CD8-positive, alpha-beta T cell (primary cell): ENCODE measurements at regions of chr21 and their contacts with region 1.

Region 1: DNA sequence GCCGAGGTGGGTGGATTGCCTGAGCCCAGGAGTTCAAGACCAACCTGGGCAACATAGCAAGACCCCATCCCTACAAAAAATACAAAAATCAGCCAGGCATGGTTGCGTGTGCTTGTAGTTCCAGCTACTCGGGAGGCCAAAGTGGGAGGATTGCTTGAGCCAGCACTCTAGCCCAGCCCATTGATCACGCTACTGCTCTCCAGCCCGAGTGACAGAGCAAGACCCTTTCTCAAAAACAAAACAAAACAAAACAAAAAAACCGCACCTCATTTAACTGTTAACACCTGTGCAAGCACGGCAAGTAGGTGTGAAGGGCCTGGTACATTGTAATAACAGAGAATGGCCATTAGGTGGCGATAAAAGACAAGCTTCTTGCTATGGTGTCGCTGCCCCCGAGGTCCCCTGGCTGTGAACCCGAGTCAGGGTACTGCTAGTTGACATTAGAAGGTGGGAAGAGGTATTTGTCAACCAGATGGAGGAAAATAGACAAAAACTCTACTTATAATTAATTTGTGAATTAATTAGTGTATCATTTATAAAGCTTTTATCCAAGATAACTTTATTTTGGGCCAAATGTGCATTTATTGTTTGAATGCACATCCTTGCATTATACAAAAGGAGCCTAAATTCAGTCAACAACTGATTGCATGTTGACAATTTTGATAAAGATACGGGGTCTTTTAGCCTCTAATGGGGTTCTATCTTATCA is 66.5 kb downstream of the SH3BGR start:
- DNase-seq: peak in 8 of 9 experiments; percentile 13 to 69 (median 44)
- ATAC-seq: peak; percentile 65
- H3K4me3 ChIP-seq: no peak overlapping the region
- H3K4me3 Mint-ChIP-seq: no peak overlapping the region
- H3K27ac ChIP-seq: no peak overlapping the region
- H3K27ac Mint-ChIP-seq: no peak overlapping the region
- H3K4me1 ChIP-seq: no peaks in the 10 kb centered on the region
- H3K4me1 Mint-ChIP-seq: no peaks in the 10 kb centered on the region
- H3K27me3 ChIP-seq: no peaks in the 10 kb centered on the region
- H3K27me3 Mint-ChIP-seq: peaks cover 5% of the 10 kb centered on the region
- CTCF ChIP-seq: peak; percentile 91

Region 2: GRCh38 chr21:39715804-39716397 is 197.6 kb after region 1 on chr21:
- CTCF ChIA-PET with region 1: interaction called, 9 read pairs
- POLR2A ChIA-PET with region 1: no interaction called
- intact Hi-C with region 1: loop called in 1 of 2 experiments (anchors 1 kb)
- DNase-seq: peak in 7 of 9 experiments; percentile 2 to 49 (median 29)
- ATAC-seq: no peak
- H3K4me3 ChIP-seq: no peak overlapping the region
- H3K4me3 Mint-ChIP-seq: no peak overlapping the region
- H3K27ac ChIP-seq: no peak overlapping the region
- H3K27ac Mint-ChIP-seq: no peak overlapping the region
- H3K4me1 ChIP-seq: no peaks in the 10 kb centered on the region
- H3K4me1 Mint-ChIP-seq: no peaks in the 10 kb centered on the region
- H3K27me3 ChIP-seq: no peaks in the 10 kb centered on the region
- H3K27me3 Mint-ChIP-seq: peaks cover 5% of the 10 kb centered on the region
- CTCF ChIP-seq: peak; percentile 52

Region 3: GRCh38 chr21:39915881-39916280 is 397.6 kb after region 1 on chr21:
- CTCF ChIA-PET with region 1: no interaction called
- POLR2A ChIA-PET with region 1: no interaction called
- intact Hi-C with region 1: loop called in 1 of 2 experiments (anchors 5 kb)
- DNase-seq: no peak
- ATAC-seq: no peak
- H3K4me3 ChIP-seq: no peak overlapping the region
- H3K4me3 Mint-ChIP-seq: no peak overlapping the region
- H3K27ac ChIP-seq: no peak overlapping the region
- H3K27ac Mint-ChIP-seq: no peak overlapping the region
- H3K4me1 ChIP-seq: no peaks in the 10 kb centered on the region
- H3K4me1 Mint-ChIP-seq: no peaks in the 10 kb centered on the region
- H3K27me3 ChIP-seq: no peaks in the 10 kb centered on the region
- H3K27me3 Mint-ChIP-seq: no peaks in the 10 kb centered on the region
- CTCF ChIP-seq: no peak